ENCODE measurements at regions of chr12 and their contacts with region 1.

Region 1: DNA sequence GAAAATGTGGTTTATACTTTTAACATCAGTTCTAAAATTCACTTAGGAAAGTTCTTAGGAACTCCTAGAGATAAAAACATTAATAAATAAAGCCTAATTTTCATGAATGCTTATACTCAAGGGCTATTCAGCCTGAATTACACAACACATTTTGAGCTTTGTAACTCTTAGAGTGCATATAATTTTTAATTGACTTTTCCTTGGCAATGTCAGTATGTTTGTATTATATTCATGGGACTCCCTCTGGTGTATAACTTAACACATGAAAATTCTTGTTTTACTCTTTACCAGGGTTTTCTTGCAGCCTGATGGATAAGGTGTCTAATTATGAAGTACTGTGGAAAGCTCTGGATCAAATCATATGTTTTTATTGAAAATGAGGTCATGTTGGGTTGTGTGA is 150.6 kb upstream of the HMGA2 start:
- DNase-seq: peak; percentile 51
- ATAC-seq: no peak; the same call in 1 of the 2 replicates
- H3K4me3 ChIP-seq: no peak overlapping the region
- H3K27ac ChIP-seq: no peak overlapping the region
- H3K4me1 ChIP-seq: peaks cover 17% of the 10 kb centered on the region
- H3K27me3 ChIP-seq: no peaks in the 10 kb centered on the region
- CTCF ChIP-seq: no peak; the same call in 1 of the 2 replicates
- POLR2A ChIP-seq: no peak
- RAD21 ChIP-seq: peak; percentile 45

Region 2: DNA sequence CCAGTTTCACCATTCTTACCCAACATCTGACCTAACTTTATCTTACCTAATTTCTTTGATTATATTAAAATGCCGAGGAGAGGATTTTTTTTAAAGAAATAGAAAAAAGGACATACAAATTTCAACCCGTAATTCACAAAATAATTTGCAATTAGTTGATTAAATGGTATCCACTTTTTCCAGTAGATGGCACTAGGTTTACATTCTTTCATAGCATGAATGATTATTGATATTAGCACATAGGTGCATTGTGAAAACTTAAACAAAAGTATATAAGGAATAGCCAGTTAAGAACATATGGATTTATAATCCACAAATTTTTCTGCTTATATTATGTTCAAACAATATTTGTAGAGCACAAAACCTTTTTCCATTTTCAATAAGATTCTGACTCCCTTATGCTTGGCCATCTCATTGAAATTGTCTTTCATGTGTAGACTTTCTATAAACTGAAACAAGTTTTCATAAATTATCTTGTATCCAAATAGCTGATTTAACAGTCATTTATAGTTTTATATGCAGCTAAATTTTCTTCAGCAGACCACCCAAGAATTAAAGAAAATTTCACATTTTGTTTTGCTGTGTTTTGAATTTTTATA is 359.9 kb before region 1 on chr12:
- CTCF ChIA-PET with region 1: no interaction called
- POLR2A ChIA-PET with region 1: no interaction called
- dilution Hi-C with region 1: no loop called
- in situ Hi-C with region 1: loop called (anchors 25 kb)
- intact Hi-C with region 1: loop called (anchors 2 kb)
- DNase-seq: peak; percentile 47
- ATAC-seq: peak; percentile 32; the same call in 1 of the 2 replicates
- H3K4me3 ChIP-seq: no peak overlapping the region
- H3K27ac ChIP-seq: no peak overlapping the region
- H3K4me1 ChIP-seq: 0 out of 2 replicates have a peak, but pooled peaks cover 1% of the 10 kb centered on the region
- H3K27me3 ChIP-seq: no peaks in the 10 kb centered on the region
- CTCF ChIP-seq: peak; percentile 62
- POLR2A ChIP-seq: no peak
- RAD21 ChIP-seq: peak; percentile 74

Region 3: GRCh38 chr12:65631621-65632111 is 42.1 kb before region 1 on chr12:
- CTCF ChIA-PET with region 1: no interaction called
- POLR2A ChIA-PET with region 1: no interaction called
- dilution Hi-C with region 1: no loop called
- in situ Hi-C with region 1: no loop called
- intact Hi-C with region 1: loop called (anchors 5 kb)
- DNase-seq: peak; percentile 100
- ATAC-seq: peak; percentile 79
- H3K4me3 ChIP-seq: no peak overlapping the region
- H3K27ac ChIP-seq: peak overlapping the region; percentile 78
- H3K4me1 ChIP-seq: peaks cover 22% of the 10 kb centered on the region
- H3K27me3 ChIP-seq: no peaks in the 10 kb centered on the region
- CTCF ChIP-seq: no peak
- POLR2A ChIP-seq: peak; percentile 57
- RAD21 ChIP-seq: peak; percentile 32; the same call in 1 of the 2 replicates

Region 4: DNA sequence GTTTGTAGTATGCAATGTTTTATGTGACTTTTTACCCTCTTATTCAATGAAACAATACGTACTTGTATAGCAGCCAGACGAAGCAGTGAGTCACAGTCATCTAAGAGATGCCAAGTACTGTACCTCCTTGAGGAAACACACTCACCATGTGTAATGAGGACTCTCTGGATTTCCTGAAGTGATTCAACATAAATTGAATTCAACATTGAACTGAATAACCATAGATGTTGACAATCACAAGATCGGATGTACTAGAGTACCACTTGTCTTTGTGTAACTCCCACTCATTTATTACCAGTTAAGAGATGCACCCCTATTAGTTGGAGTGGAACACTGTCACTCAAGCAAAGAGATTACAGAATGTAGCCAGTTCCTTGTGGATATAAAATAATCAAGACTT is 24.6 kb before region 1 on chr12:
- CTCF ChIA-PET with region 1: no interaction called
- POLR2A ChIA-PET with region 1: no interaction called
- dilution Hi-C with region 1: no loop called
- in situ Hi-C with region 1: no loop called
- intact Hi-C with region 1: no loop called
- DNase-seq: peak; percentile 100
- ATAC-seq: peak; percentile 89
- H3K4me3 ChIP-seq: no peak overlapping the region
- H3K27ac ChIP-seq: no peak overlapping the region
- H3K4me1 ChIP-seq: peaks cover 8% of the 10 kb centered on the region
- H3K27me3 ChIP-seq: no peaks in the 10 kb centered on the region
- CTCF ChIP-seq: no peak
- POLR2A ChIP-seq: 0 out of 2 replicates have a peak, but pooled peaks have one; percentile 4
- RAD21 ChIP-seq: no peak

Region 5: DNA sequence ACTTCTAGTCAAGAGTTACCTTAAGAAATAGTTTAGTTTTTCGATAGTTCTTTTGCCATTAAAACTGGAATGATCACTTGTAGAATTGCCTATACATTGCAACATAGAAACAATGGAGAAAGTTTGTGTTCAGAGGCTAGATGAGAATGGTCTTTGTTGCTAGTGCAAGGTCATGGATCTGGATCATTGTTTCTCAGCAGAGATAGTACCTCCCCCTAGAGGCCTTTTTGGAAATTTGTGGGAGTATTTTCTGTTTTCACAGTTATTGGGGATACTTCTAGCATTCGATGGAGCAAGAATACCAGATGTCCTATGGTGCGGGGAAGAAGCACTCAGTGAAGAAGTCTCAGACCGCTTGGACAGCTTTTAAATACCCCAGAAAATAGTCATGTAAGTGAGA is 11.8 kb after region 1 on chr12:
- CTCF ChIA-PET with region 1: no interaction called
- POLR2A ChIA-PET with region 1: no interaction called
- dilution Hi-C with region 1: no loop called
- in situ Hi-C with region 1: no loop called
- intact Hi-C with region 1: no loop called
- DNase-seq: peak; percentile 43
- ATAC-seq: peak; percentile 59; the same call in 1 of the 2 replicates
- H3K4me3 ChIP-seq: no peak overlapping the region
- H3K27ac ChIP-seq: no peak overlapping the region
- H3K4me1 ChIP-seq: no peaks in the 10 kb centered on the region; the same call in 1 of the 2 replicates
- H3K27me3 ChIP-seq: no peaks in the 10 kb centered on the region
- CTCF ChIP-seq: peak; percentile 58
- POLR2A ChIP-seq: no peak
- RAD21 ChIP-seq: peak; percentile 64

Region 6: GRCh38 chr12:66087365-66087943 is 413.7 kb after region 1 on chr12:
- CTCF ChIA-PET with region 1: no interaction called
- POLR2A ChIA-PET with region 1: no interaction called
- dilution Hi-C with region 1: no loop called
- in situ Hi-C with region 1: no loop called
- intact Hi-C with region 1: loop called (anchors 10 kb)
- DNase-seq: peak; percentile 88
- ATAC-seq: peak; percentile 93
- H3K4me3 ChIP-seq: no peak overlapping the region
- H3K27ac ChIP-seq: no peak overlapping the region
- H3K4me1 ChIP-seq: peaks cover 4% of the 10 kb centered on the region
- H3K27me3 ChIP-seq: no peaks in the 10 kb centered on the region
- CTCF ChIP-seq: peak; percentile 89
- POLR2A ChIP-seq: peak; percentile 30; the same call in 1 of the 2 replicates
- RAD21 ChIP-seq: peak; percentile 91

Region 7: DNA sequence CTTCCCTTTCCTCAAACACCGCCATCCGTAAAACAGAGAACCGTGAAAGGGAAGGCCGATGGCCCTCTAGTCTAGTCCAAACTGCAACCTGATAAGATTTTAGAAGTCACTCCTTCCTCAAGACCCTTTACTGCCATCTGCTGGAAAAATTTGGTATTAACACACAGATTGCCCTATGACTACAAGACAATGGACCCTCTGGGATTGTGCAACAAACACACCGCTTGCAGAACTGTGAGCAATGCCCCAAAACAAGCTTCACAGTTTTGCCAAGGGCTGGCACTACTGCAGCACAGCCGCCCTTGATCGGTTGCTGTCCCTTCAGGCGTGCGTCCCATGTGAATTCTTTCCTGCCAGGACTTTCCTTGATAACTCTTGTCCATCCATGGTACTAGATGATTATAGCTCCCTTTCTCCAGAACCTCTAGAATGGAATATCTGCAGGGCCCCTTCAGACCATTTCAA is 433.8 kb after region 1 on chr12:
- CTCF ChIA-PET with region 1: no interaction called
- POLR2A ChIA-PET with region 1: no interaction called
- dilution Hi-C with region 1: no loop called
- in situ Hi-C with region 1: no loop called
- intact Hi-C with region 1: loop called (anchors 5 kb)
- DNase-seq: peak; percentile 94
- ATAC-seq: peak; percentile 99
- H3K4me3 ChIP-seq: no peak overlapping the region
- H3K27ac ChIP-seq: no peak overlapping the region
- H3K4me1 ChIP-seq: peaks cover 4% of the 10 kb centered on the region
- H3K27me3 ChIP-seq: no peaks in the 10 kb centered on the region
- CTCF ChIP-seq: peak; percentile 77
- POLR2A ChIP-seq: no peak
- RAD21 ChIP-seq: peak; percentile 79